Cardiac septum (tissue), 1 donor: ENCODE measurements at regions of chr5 and their contacts with region 1.

Region 1: DNA sequence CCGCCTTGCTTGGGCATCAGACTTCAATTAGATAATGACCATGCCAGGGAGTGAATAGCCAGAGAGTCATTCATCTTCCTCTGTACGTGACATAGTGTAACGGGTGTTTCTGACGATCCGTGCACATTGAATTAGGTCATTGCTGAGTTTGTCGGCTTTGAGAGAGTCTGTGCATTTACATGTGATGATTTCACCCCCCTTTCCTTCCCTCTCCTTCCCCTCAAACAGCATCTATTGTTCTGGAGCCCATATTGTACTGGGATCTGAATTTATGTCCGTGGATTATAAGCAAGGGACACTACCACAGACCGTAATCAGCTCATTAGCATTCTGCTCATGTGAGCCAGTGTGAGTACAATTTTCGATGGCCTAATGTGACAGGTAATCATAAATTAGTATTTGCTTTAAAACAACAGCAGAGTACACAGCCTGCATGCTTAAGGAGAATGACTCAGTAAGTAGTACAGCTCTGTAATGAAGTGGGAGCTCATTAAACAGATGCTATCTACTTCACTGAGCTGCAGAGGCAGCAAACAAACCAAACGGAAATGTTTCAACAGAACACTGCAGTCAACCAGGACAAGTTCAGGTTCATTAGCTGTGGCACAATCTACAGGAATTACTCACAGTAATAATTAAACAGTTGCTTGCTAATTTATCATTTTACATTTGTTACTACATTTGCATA is 302.1 kb downstream of the CSNK1G3 start:
- DNase-seq: no peak

Region 2: GRCh38 chr5:123835317-123835771 is 21.3 kb after region 1 on chr5:
- intact Hi-C with region 1: no loop called
- DNase-seq: no peak

Region 3: DNA sequence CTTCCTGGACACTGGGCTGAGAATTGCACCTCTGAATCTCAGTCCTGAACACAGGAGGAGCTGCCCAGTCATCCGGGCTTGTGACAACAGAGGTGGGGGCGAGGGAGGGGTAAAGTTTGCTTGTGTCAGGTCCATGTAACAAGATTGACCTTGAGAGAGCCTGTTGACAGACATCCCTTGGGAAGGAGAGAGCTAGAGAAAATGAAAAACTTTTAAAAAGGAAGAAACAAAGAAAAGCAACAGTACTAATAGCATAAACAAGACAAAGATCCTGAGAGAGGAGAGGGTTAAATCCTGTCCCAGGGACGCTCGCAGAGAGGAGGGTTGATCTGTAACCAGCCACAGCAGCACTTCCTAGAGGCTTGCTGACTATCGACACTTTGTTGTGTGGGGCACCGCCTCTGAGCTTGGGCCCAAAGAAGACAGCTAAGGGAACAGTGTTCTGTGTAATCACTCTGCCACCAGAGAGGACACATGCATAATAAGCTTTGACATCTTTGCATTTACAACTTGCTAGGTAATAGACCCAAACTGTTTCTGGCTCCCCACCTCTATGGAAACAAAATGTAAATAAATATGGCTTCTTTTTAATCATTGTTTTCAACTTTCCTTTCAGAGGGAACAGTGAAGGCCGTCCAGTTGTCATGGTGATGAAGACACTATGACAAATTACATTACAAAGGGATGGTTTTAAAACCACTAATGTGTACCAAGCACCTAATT is 61.6 kb after region 1 on chr5:
- intact Hi-C with region 1: loop called (anchors 2 kb)
- DNase-seq: no peak

Region 4: GRCh38 chr5:123916331-123917121 is 102.4 kb after region 1 on chr5:
- intact Hi-C with region 1: loop called (anchors 5 kb)
- DNase-seq: no peak